B cell (primary cell): ENCODE measurements at regions of chr6 and their contacts with region 1.

Region 1: GRCh38 chr6:10510592-10511367 is 10.4 kb upstream of the GCNT2 start:
- DNase-seq: peak; percentile 77
- ATAC-seq: peak; percentile 100
- H3K4me3 ChIP-seq: no peak overlapping the region
- H3K4me3 Mint-ChIP-seq: peak overlapping the region; percentile 65
- H3K27ac ChIP-seq: no peak overlapping the region
- H3K27ac Mint-ChIP-seq: no peak overlapping the region
- H3K4me1 ChIP-seq: peaks cover 0 to 5% of the 10 kb centered on the region in 2 donors
- H3K4me1 Mint-ChIP-seq: peaks cover 8% of the 10 kb centered on the region
- H3K27me3 ChIP-seq: no peaks in the 10 kb centered on the region
- H3K27me3 Mint-ChIP-seq: no peaks in the 10 kb centered on the region
- CTCF ChIP-seq: peak; percentile 87

Region 2: GRCh38 chr6:10219510-10219909 is 291.3 kb before region 1 on chr6:
- CTCF ChIA-PET with region 1: no interaction called
- POLR2A ChIA-PET with region 1: no interaction called
- intact Hi-C with region 1: no loop called
- DNase-seq: no peak
- ATAC-seq: no peak
- H3K4me3 ChIP-seq: no peak overlapping the region
- H3K4me3 Mint-ChIP-seq: no peak overlapping the region
- H3K27ac ChIP-seq: no peak overlapping the region
- H3K27ac Mint-ChIP-seq: no peak overlapping the region
- H3K4me1 ChIP-seq: no peaks in the 10 kb centered on the region
- H3K4me1 Mint-ChIP-seq: no peaks in the 10 kb centered on the region
- H3K27me3 ChIP-seq: no peaks in the 10 kb centered on the region
- H3K27me3 Mint-ChIP-seq: peaks cover 5% of the 10 kb centered on the region
- CTCF ChIP-seq: no peak

Region 3: DNA sequence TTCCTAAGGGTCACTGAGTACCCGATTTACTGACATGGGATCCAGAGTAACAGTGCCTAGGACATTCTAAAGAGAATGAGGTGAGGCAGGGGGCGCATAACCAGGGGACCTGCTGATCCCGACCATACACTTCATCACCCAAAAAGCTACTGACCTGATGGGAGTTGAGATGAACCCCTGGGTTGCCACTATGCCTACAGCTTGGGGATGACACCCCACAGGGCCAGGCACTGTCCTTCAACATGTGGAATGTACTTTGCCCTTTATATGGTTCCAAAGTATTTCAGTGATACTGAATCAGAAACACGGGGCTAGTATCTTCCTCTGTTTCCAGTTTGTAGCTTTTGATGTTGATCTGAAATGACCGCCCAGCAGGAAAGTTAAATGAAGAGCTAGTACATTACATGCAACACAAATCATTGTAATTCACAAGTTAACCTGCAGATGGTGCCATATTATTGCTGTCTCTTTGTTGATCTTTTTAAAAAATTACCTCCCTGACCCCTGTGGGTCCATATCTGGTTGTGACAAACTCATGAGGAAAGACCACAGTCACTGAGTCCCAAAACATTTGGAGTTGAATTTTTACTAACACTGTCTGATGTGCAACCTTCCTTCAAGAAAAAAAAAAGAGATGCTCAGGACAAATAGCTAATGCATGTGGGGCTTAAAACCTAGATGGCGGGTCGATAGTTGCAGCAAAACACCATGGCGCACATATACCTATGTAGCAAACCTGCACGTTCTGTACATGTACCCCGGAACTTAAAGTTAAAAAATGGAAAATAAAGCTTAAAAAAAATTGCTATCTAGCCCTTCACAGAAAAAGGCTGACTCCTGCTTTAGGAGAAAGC is 32.4 kb before region 1 on chr6:
- CTCF ChIA-PET with region 1: interaction called, 20 read pairs
- POLR2A ChIA-PET with region 1: no interaction called
- intact Hi-C with region 1: no loop called
- DNase-seq: peak; percentile 60
- ATAC-seq: peak; percentile 21
- H3K4me3 ChIP-seq: no peak overlapping the region
- H3K4me3 Mint-ChIP-seq: no peak overlapping the region
- H3K27ac ChIP-seq: no peak overlapping the region
- H3K27ac Mint-ChIP-seq: no peak overlapping the region
- H3K4me1 ChIP-seq: no peaks in the 10 kb centered on the region
- H3K4me1 Mint-ChIP-seq: no peaks in the 10 kb centered on the region
- H3K27me3 ChIP-seq: no peaks in the 10 kb centered on the region
- H3K27me3 Mint-ChIP-seq: peaks cover 30% of the 10 kb centered on the region
- CTCF ChIP-seq: peak; percentile 80

Region 4: DNA sequence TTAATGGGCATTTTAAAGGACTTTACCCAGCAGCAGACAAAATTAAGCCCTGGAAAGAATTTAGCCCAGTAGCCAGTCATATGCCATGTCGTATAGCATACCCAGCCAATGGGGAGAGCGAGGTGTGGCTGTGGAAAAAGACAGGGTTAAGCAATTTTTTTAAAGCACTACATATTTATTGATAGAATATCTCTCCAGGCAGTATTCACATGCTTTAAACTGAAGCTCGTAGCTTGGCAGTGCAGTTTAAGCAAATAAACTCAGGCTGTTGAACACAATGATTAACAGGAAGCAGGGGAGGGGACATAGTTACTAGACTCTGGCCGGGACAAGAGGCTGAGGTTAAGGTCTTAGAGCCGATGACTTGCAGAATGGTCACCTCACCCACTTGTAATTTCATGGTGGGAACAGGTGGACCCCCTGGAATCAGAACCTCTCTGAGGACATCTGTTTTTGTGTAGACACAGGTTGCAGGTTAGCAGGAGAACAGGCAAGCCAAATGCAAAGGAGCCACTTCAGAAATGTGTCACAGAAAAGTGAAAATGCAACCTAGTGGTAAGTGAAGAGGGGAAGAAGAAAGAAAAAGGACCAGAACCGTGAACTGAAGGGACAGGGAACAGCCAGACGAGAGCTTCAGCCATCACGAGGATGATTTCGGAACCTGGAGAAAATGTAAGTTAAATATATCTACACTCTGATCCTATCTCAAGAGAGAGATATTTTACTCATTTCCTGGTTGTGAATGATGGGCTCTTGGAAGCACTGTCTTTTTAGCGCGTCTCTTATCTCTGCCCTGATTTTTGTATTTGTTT is 17.6 kb after region 1 on chr6:
- CTCF ChIA-PET with region 1: interaction called, 40 read pairs
- POLR2A ChIA-PET with region 1: no interaction called
- intact Hi-C with region 1: no loop called
- DNase-seq: peak; percentile 67
- ATAC-seq: peak; percentile 48
- H3K4me3 ChIP-seq: peak overlapping the region; percentile 63 to 86 (median 73)
- H3K4me3 Mint-ChIP-seq: peak overlapping the region; percentile 92
- H3K27ac ChIP-seq: peak overlapping the region; percentile 70 to 83
- H3K27ac Mint-ChIP-seq: peak overlapping the region; percentile 87
- H3K4me1 ChIP-seq: peaks cover 36 to 58% of the 10 kb centered on the region in 2 donors
- H3K4me1 Mint-ChIP-seq: peaks cover 57% of the 10 kb centered on the region
- H3K27me3 ChIP-seq: no peaks in the 10 kb centered on the region
- H3K27me3 Mint-ChIP-seq: no peaks in the 10 kb centered on the region
- CTCF ChIP-seq: no peak

Region 5: GRCh38 chr6:10618409-10618808 is 107.6 kb after region 1 on chr6:
- CTCF ChIA-PET with region 1: interaction called, 11 read pairs
- POLR2A ChIA-PET with region 1: interaction called, 3 read pairs
- intact Hi-C with region 1: no loop called
- DNase-seq: no peak
- ATAC-seq: no peak
- H3K4me3 ChIP-seq: no peak overlapping the region
- H3K4me3 Mint-ChIP-seq: no peak overlapping the region
- H3K27ac ChIP-seq: no peak overlapping the region
- H3K27ac Mint-ChIP-seq: no peak overlapping the region
- H3K4me1 ChIP-seq: no peaks in the 10 kb centered on the region
- H3K4me1 Mint-ChIP-seq: peaks cover 7% of the 10 kb centered on the region
- H3K27me3 ChIP-seq: no peaks in the 10 kb centered on the region
- H3K27me3 Mint-ChIP-seq: no peaks in the 10 kb centered on the region
- CTCF ChIP-seq: no peak

Region 6: GRCh38 chr6:10722820-10723566 is 212.2 kb after region 1 on chr6 and contains the start of gene TMEM14C:
- CTCF ChIA-PET with region 1: interaction called, 12 read pairs
- POLR2A ChIA-PET with region 1: no interaction called
- intact Hi-C with region 1: no loop called
- DNase-seq: peak; percentile 82
- ATAC-seq: peak; percentile 99
- H3K4me3 ChIP-seq: peak within 1 kb of the TSS; percentile 52 to 82 (median 70)
- H3K4me3 Mint-ChIP-seq: peak within 1 kb of the TSS; percentile 98
- H3K27ac ChIP-seq: peak within 1 kb of the TSS; percentile 1 to 67
- H3K27ac Mint-ChIP-seq: peak within 1 kb of the TSS; percentile 95
- H3K4me1 ChIP-seq: peaks cover 16 to 31% of the 10 kb centered on the region in 2 donors
- H3K4me1 Mint-ChIP-seq: peaks cover 42% of the 10 kb centered on the region
- H3K27me3 ChIP-seq: no peaks in the 10 kb centered on the region
- H3K27me3 Mint-ChIP-seq: no peaks in the 10 kb centered on the region
- CTCF ChIP-seq: no peak
- total RNA-seq, gene TMEM14C: 25.0 and 31.7 TPM in 2 replicates

Region 7: DNA sequence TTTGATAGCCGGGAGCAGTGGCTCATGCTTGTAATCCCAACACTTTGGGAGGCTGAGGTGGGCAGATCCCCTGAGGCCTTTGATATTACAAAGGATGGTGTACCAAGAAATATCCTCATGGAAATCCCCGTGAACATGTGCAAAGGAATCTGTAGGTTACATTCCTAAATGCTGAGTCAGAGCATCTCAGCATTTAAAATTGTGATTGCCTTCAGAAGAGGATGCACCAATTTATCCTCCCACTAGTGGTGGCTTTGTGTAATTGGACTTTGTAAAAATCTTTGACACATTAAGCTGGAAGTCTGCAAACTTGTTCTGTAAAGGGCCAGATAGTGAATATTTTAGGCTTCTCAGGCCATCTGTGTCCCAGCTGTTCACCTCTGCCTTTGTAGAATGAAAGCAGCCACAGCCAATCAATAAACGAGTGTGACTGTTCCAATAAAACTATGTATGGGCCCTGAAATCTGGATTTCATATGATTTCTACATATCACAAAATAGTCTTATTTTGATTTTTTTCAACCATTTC is 248.6 kb after region 1 on chr6:
- CTCF ChIA-PET with region 1: interaction called, 17 read pairs
- POLR2A ChIA-PET with region 1: no interaction called
- intact Hi-C with region 1: loop called (anchors 1 kb)
- DNase-seq: peak; percentile 36
- ATAC-seq: peak; percentile 28
- H3K4me3 ChIP-seq: no peak overlapping the region
- H3K4me3 Mint-ChIP-seq: no peak overlapping the region
- H3K27ac ChIP-seq: no peak overlapping the region
- H3K27ac Mint-ChIP-seq: no peak overlapping the region
- H3K4me1 ChIP-seq: no peaks in the 10 kb centered on the region
- H3K4me1 Mint-ChIP-seq: peaks cover 2% of the 10 kb centered on the region
- H3K27me3 ChIP-seq: no peaks in the 10 kb centered on the region
- H3K27me3 Mint-ChIP-seq: no peaks in the 10 kb centered on the region
- CTCF ChIP-seq: peak; percentile 63

Region 8: GRCh38 chr6:11064836-11065235 is 554.1 kb after region 1 on chr6:
- CTCF ChIA-PET with region 1: interaction called, 11 read pairs
- POLR2A ChIA-PET with region 1: no interaction called
- intact Hi-C with region 1: no loop called
- DNase-seq: no peak
- ATAC-seq: no peak
- H3K4me3 ChIP-seq: no peak overlapping the region
- H3K4me3 Mint-ChIP-seq: no peak overlapping the region
- H3K27ac ChIP-seq: no peak overlapping the region
- H3K27ac Mint-ChIP-seq: no peak overlapping the region
- H3K4me1 ChIP-seq: no peaks in the 10 kb centered on the region
- H3K4me1 Mint-ChIP-seq: no peaks in the 10 kb centered on the region
- H3K27me3 ChIP-seq: peaks cover 0 to 3% (median 3%) of the 10 kb centered on the region in 4 experiments
- H3K27me3 Mint-ChIP-seq: peaks cover 18% of the 10 kb centered on the region
- CTCF ChIP-seq: no peak